Heart right ventricle (tissue), 16 donors: ENCODE measurements at regions of chr17 and their contacts with region 1.

Region 1: DNA sequence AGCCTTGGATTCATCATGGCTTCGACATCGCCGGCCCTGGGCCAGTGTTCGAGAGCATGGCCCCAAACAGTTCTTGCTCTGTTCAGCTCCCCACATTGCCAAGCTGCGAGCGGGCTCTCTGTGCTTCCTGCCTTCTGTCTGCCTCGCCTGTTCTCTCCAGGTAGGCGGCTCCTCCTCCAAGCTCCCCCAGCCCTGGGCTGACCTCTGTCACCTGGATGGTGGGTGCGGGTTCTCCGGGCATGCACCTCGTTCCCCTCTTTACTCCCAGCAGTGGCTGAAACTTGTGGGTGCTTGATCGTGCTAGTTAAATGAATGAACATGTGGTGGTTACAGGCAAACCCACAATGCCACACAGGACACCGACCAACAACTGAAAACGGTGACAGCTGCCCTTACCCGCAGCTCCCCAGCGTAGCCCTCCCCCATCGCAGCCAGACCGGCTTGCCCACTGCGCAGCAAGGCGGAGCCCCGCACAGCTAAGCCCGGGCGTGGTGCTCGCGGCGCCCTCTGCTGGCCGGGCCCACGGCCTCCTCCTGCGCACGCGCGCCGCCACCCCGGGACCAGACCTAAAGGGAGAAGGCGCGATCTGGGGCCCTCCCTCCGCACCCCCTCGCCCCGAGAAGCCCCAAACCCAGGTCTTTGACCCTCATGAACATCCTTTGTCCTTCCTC is 23.0 kb upstream of the EIF1 start:
- DNase-seq: peak; percentile 80 to 91
- ATAC-seq: peak; percentile 93 to 97 (median 96)
- H3K4me3 ChIP-seq: peak overlapping the region; percentile 43 to 68 (median 58)
- H3K27ac ChIP-seq: peak overlapping the region in 9 of 10 donors; percentile 46 to 89 (median 76)
- H3K4me1 ChIP-seq: peaks cover 0 to 34% (median 14%) of the 10 kb centered on the region in 9 donors
- H3K27me3 ChIP-seq: no peaks in the 10 kb centered on the region
- CTCF ChIP-seq: peak; percentile 93 to 99 (median 98)

Region 2: DNA sequence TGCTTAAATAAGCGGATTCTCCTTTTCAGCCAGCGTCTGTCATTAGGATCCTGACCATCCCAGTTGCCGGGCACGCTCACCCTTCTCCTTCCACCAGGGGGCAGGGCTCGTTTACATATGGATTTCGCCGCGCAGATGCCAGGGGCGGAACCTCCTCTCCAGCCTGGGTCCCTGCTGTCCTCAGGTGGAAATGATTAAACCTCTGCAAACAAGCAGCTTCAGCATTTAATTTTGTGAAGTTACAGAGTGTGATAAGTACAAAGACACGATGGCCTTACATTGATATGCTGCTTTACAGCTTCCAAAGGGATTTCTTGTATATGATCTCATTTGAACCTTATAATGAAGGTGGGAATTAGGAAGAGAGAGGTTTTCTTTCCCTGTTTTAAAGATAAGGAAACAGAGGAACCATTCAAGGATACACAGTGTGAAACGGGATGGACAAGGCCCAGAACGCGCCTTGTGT is 862.1 kb before region 1 on chr17:
- intact Hi-C with region 1: loop called (anchors 2 to 10 kb)
- DNase-seq: peak; percentile 71 to 74
- ATAC-seq: peak in 7 of 8 donors; percentile 67 to 94 (median 82)
- H3K4me3 ChIP-seq: no peak overlapping the region
- H3K27ac ChIP-seq: no peak overlapping the region
- H3K4me1 ChIP-seq: peaks cover 0 to 8% (median 3%) of the 10 kb centered on the region in 9 donors
- H3K27me3 ChIP-seq: peaks cover 0 to 78% (median 20%) of the 10 kb centered on the region in 7 donors
- CTCF ChIP-seq: peak; percentile 49 to 92 (median 83)

Region 3: GRCh38 chr17:40854159-40854814 is 811.4 kb before region 1 on chr17:
- intact Hi-C with region 1: loop called in 6 of 10 experiments (anchors 2 to 5 kb)
- DNase-seq: no peak
- ATAC-seq: peak in 1 of 8 donors; percentile 62
- H3K4me3 ChIP-seq: no peak overlapping the region
- H3K27ac ChIP-seq: no peak overlapping the region
- H3K4me1 ChIP-seq: peaks cover 0 to 14% (median 0%) of the 10 kb centered on the region in 9 donors
- H3K27me3 ChIP-seq: peaks cover 0 to 16% (median 0%) of the 10 kb centered on the region in 7 donors
- CTCF ChIP-seq: no peak

Region 4: GRCh38 chr17:41548844-41549595 is 116.7 kb before region 1 on chr17:
- intact Hi-C with region 1: loop called in 8 of 10 experiments (anchors 1 to 5 kb)
- DNase-seq: peak; percentile 75 to 79
- ATAC-seq: peak; percentile 87 to 95 (median 92)
- H3K4me3 ChIP-seq: peak overlapping the region in 9 of 10 donors; percentile 10 to 39 (median 30)
- H3K27ac ChIP-seq: peak overlapping the region in 2 of 10 donors; percentile 25 to 54
- H3K4me1 ChIP-seq: peaks cover 0 to 22% (median 16%) of the 10 kb centered on the region in 9 donors
- H3K27me3 ChIP-seq: peaks cover 0 to 38% (median 8%) of the 10 kb centered on the region in 7 donors
- CTCF ChIP-seq: peak; percentile 77 to 91 (median 84)

Region 5: GRCh38 chr17:41710468-41711090 is 44.9 kb after region 1 on chr17:
- intact Hi-C with region 1: no loop called
- DNase-seq: no peak
- ATAC-seq: no peak
- H3K4me3 ChIP-seq: no peak overlapping the region
- H3K27ac ChIP-seq: no peak overlapping the region
- H3K4me1 ChIP-seq: no peaks in the 10 kb centered on the region
- H3K27me3 ChIP-seq: peaks cover 0 to 14% (median 4%) of the 10 kb centered on the region in 7 donors
- CTCF ChIP-seq: no peak